ENCODE measurements at regions of chrX and their contacts with region 1.

Region 1: DNA sequence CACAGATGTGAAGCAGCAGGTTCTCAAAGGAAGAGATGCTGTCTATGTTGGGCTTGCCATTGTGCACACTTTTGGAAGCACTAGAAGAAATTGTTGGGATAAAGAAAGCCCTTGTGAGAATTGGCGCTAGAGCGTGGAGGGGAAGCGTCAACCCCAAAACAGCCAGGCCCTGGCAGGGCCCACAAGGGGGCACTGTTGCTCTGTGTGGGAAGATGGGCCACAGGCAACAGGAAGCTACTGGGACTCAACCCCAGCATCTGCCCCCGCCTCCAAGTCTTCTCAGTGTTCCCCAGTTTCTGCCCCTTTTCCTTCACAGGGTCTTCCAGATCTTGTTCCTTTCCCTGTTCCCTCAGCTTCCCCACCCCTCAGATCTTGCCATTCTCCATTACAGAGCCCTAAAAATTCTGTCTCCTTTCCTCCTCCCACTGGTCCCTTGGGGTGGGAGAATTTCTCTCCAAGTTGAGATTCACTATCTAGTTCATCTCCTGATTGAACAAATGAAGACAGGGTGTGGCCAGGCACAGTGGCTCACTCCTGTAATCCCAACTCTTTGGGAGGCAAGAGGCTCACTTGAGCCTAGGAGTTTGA is 85.5 kb downstream of the STARD8 start:
- DNase-seq: peak; percentile 82
- ATAC-seq: peak; percentile 83
- H3K4me3 Mint-ChIP-seq: no peak overlapping the region
- H3K27ac Mint-ChIP-seq: no peak overlapping the region
- H3K4me1 Mint-ChIP-seq: peaks cover 2% of the 10 kb centered on the region
- H3K27me3 Mint-ChIP-seq: peaks cover 9% of the 10 kb centered on the region

Region 2: GRCh38 chrX:68807818-68808217 is 74.8 kb after region 1 on chrX:
- CTCF ChIA-PET with region 1: interaction called, 22 read pairs
- POLR2A ChIA-PET with region 1: no interaction called
- intact Hi-C with region 1: loop called (anchors 1 to 5 kb)
- DNase-seq: no peak
- ATAC-seq: no peak
- H3K4me3 Mint-ChIP-seq: no peak overlapping the region
- H3K27ac Mint-ChIP-seq: no peak overlapping the region
- H3K4me1 Mint-ChIP-seq: no peaks in the 10 kb centered on the region
- H3K27me3 Mint-ChIP-seq: peaks cover 11% of the 10 kb centered on the region

Region 3: DNA sequence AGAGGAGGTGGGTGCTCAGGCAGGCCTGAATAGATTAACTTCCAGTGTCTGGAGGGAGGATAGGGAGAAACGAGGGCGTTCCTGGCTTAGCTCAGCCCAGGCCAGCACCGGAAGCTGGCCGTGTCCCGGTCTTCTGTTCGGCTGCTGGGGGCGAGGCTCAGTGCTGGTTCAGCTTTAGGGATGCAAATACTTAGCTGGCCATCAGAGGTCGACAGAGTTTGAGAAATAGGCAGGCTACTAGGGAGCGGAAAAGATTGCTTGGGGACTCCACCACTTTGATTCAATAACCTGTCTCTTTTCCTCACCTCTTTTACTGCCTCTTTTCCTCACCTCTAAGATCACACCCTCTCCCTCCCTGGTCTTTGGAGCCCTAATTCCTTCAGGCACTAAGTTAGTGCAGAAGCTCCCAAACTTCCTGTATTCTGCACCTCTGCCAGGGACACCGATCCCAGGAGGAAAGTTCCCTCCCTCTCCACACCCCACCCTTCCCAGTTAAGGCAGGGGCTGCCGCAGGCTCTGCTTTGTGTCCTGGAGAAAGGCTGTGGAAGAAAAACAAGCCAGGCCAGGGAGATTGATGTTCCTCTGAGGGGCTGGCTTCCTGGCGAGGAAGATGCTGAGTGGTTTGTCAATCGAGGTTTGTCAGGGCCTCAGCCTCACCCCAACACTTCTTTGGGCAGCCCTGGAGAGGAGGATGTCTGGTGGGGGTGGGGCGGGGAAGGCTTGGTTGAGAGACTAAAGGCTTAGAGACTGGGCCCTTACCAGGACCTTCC is 89.8 kb after region 1 on chrX:
- CTCF ChIA-PET with region 1: interaction called, 4 read pairs
- POLR2A ChIA-PET with region 1: interaction called, 3 read pairs
- intact Hi-C with region 1: loop called in 1 of 2 experiments (anchors 1 kb)
- DNase-seq: peak; percentile 39
- ATAC-seq: peak; percentile 82
- H3K4me3 Mint-ChIP-seq: no peak overlapping the region
- H3K27ac Mint-ChIP-seq: no peak overlapping the region
- H3K4me1 Mint-ChIP-seq: peaks cover 3% of the 10 kb centered on the region
- H3K27me3 Mint-ChIP-seq: no peaks in the 10 kb centered on the region

Region 4: GRCh38 chrX:69285881-69286564 is 553.0 kb after region 1 on chrX:
- CTCF ChIA-PET with region 1: no interaction called
- POLR2A ChIA-PET with region 1: no interaction called
- intact Hi-C with region 1: loop called in 1 of 2 experiments (anchors 1 kb)
- DNase-seq: peak; percentile 72
- ATAC-seq: peak; percentile 66
- H3K4me3 Mint-ChIP-seq: peak overlapping the region; percentile 10
- H3K27ac Mint-ChIP-seq: no peak overlapping the region
- H3K4me1 Mint-ChIP-seq: no peaks in the 10 kb centered on the region
- H3K27me3 Mint-ChIP-seq: peaks cover 2% of the 10 kb centered on the region

Region 5: DNA sequence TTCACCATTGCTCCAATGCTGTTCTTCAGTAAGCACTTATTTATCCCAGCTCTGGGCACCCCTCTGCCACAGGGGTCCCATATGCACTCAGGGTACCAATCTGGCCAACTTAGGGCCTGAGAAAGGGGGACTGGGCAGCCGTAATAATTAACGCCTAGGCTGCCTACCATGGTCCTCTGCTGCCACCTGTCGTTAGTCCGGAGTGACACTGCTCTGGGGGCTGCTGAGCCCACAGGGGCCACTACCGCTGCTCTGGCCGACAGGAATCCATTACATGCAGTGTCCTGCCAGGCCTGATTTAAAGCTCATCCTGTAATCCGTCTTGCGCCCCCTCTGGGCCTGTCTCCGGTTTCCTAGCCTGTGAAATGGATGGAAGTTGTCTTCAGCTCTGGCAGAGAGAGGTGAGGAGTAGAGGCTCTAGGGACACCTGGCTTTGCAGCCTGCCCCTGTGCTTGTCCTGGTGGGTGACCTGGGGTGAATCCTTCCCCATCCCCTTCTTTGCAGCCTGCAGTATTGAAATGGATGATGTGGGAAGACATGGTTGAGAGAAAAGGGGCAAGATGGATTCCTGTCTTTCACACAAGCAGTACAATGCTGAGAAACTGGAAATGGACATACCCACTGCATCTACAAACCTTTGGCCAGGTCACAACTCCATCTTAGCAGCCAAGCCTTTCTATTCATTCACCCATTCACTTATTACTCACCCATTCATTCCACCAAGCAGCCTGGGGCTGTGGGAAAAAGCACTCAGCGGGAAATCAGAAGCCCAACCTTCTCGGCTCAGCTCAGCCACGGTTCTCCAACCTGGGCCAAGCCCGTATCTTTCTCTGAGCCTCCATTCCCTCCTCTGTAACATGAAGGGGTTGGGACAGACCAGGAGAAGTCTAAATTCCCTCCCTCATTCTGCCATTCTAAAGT is 654.8 kb after region 1 on chrX:
- CTCF ChIA-PET with region 1: no interaction called
- POLR2A ChIA-PET with region 1: no interaction called
- intact Hi-C with region 1: loop called in 1 of 2 experiments (anchors 1 kb)
- DNase-seq: peak; percentile 53
- ATAC-seq: peak; percentile 65
- H3K4me3 Mint-ChIP-seq: no peak overlapping the region
- H3K27ac Mint-ChIP-seq: no peak overlapping the region
- H3K4me1 Mint-ChIP-seq: no peaks in the 10 kb centered on the region
- H3K27me3 Mint-ChIP-seq: peaks cover 2% of the 10 kb centered on the region